ENCODE measurements at regions of chr20 and their contacts with region 1.

Region 1: GRCh38 chr20:49219089-49219923 is at the start of gene DDX27:
- DNase-seq: peak; percentile 86 to 99
- ATAC-seq: peak; percentile 89 to 96
- H3K4me3 ChIP-seq: peak within 1 kb of the TSS; percentile 97
- H3K27ac ChIP-seq: peak within 1 kb of the TSS; percentile 91 to 92
- H3K4me1 ChIP-seq: peaks cover 14% of the 10 kb centered on the region
- CTCF ChIP-seq: no peak
- EP300 ChIP-seq: no peak
- POLR2A ChIP-seq: peak; percentile 95
- RAD21 ChIP-seq: no peak
- polyA plus RNA-seq, gene DDX27: 60.2 and 69.3 TPM in 2 replicates

Region 2: GRCh38 chr20:49132995-49133478 is 86.3 kb before region 1 on chr20:
- CTCF ChIA-PET with region 1: interaction called, 140 read pairs
- POLR2A ChIA-PET with region 1: interaction called, 12 read pairs
- DNase-seq: peak; percentile 57 to 73
- ATAC-seq: peak; percentile 75 to 89
- H3K4me3 ChIP-seq: no peak overlapping the region
- H3K27ac ChIP-seq: no peak overlapping the region
- H3K4me1 ChIP-seq: no peaks in the 10 kb centered on the region
- CTCF ChIP-seq: peak; percentile 81
- EP300 ChIP-seq: no peak
- POLR2A ChIP-seq: no peak
- RAD21 ChIP-seq: peak; percentile 73 to 74

Region 3: GRCh38 chr20:49161428-49162152 is 57.7 kb before region 1 on chr20:
- CTCF ChIA-PET with region 1: interaction called, 23 read pairs
- POLR2A ChIA-PET with region 1: interaction called, 7 read pairs
- DNase-seq: no peak
- ATAC-seq: no peak
- H3K4me3 ChIP-seq: no peak overlapping the region
- H3K27ac ChIP-seq: no peak overlapping the region
- H3K4me1 ChIP-seq: peaks cover 3% of the 10 kb centered on the region; the same call in 1 of the 3 replicates
- CTCF ChIP-seq: no peak
- EP300 ChIP-seq: no peak
- POLR2A ChIP-seq: no peak
- RAD21 ChIP-seq: no peak

Region 4: DNA sequence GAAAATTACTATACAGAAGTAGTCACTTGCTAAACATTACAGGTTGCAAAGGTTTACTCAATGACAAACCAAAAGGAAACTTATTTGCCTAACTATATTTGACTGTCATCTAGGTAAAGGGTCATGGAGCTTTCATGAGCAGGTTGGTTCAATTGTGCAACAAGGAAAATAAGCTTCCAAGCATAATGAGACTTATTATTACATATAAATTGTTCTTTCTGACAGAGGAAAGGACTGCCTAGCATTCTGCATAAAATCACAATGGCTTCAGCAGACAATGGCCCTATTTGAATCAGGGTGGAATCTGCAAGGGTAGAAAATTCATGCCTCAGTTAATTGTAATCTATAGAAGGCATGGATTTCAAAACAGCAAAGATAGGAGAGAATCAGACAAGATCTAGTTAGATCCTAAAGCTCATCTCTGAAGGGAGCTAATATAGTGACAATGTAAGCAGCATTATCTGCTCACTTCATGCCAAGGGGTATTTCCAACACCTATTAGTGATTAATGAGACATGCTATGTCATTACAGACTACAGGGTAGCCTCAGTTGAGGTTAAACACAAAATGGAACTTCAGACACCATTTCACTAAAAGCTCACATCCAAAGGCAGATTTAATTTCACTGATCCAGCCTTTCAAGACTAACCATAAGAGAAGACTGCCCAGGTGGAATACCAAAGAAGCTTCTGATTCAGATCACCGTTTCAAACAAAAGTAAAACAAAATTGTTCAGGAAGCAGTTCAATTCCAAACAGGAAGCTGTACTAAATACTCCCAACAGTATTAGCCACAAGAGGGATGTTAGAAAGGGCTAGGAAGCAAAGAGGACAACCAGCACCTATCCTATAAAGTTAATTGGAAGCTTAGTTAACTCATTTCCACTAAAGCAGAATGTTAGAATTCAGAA is 39.7 kb before region 1 on chr20:
- CTCF ChIA-PET with region 1: interaction called, 47 read pairs
- POLR2A ChIA-PET with region 1: interaction called, 5 read pairs
- DNase-seq: no peak
- ATAC-seq: no peak; a peak in 1 of 6 replicates
- H3K4me3 ChIP-seq: no peak overlapping the region
- H3K27ac ChIP-seq: no peak overlapping the region
- H3K4me1 ChIP-seq: peaks cover 48% of the 10 kb centered on the region
- CTCF ChIP-seq: no peak
- EP300 ChIP-seq: no peak
- POLR2A ChIP-seq: no peak
- RAD21 ChIP-seq: no peak

Region 5: DNA sequence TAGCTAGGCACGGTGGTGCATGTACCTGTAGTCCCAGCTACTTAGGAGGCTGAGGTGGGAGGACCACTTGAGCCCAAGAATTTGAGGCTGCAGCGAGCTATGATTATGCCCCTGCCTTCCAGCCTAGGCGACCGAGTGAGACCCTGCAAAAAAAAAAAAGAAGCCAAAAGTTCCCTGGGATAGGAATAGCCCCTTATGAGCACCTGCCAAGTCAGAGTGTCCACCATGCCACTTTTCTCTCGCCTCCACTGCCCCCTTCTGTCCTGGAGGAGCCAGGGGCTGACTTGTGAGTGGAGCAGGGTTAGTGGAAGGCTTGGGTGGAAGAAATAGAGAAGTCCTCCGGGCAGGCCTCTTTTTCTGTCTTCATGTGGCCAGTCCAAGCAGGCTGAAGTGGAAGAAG is 12.2 kb before region 1 on chr20:
- CTCF ChIA-PET with region 1: interaction called, 59 read pairs
- POLR2A ChIA-PET with region 1: interaction called, 3 read pairs
- DNase-seq: peak in 1 of 2 experiments; percentile 54
- ATAC-seq: peak; percentile 47 to 73; a peak in 4 of 6 replicates
- H3K4me3 ChIP-seq: no peak overlapping the region
- H3K27ac ChIP-seq: no peak overlapping the region
- H3K4me1 ChIP-seq: no peaks in the 10 kb centered on the region
- CTCF ChIP-seq: no peak
- EP300 ChIP-seq: no peak
- POLR2A ChIP-seq: no peak
- RAD21 ChIP-seq: no peak

Region 6: DNA sequence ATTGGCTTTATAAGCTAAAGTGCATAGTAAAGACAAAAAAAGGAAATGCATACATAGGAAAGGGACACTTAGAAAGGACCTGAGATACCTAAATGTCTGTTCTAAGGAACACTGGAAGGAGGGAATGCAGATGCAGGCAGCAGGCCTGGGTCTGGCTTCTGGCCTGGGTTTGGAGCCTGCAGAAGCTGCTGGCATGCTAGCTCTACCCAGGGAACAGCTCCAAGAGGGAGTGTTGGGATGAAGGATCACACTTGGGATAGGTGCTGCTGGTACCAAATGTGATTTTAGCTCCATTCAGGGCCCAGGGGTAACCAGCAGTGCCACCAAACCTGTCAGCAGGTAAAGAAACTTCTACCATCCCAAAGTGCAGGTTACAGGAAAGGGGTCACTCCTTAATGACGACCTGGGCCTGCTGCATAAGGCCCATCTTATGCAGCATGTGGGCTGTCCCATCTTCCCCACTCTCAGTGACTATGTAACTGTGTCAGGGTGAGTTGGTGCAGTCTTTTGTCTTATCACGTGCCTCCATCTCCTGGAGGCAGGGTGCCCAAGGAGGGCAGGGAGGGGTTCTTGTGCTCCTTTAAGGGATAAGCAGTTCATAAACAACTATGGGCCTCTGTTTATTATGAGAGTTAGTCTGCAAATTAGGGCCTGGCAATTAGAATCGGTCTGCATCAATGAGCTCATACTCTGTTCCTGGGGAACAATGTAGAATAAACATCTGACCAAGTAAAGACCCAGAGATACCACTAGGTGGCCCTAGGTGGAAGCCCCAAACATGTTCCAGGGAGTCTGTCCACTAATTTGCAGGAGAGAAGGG is 26.8 kb after region 1 on chr20:
- CTCF ChIA-PET with region 1: interaction called, 30 read pairs
- POLR2A ChIA-PET with region 1: interaction called, 5 read pairs
- DNase-seq: peak; percentile 53 to 73
- ATAC-seq: peak; percentile 80 to 88
- H3K4me3 ChIP-seq: no peak overlapping the region
- H3K27ac ChIP-seq: no peak overlapping the region
- H3K4me1 ChIP-seq: no peaks in the 10 kb centered on the region
- CTCF ChIP-seq: peak; percentile 59
- EP300 ChIP-seq: no peak
- POLR2A ChIP-seq: no peak
- RAD21 ChIP-seq: peak; percentile 27 to 47; a peak in 3 of 5 replicates